Transverse colon (tissue), 4 donors: ENCODE measurements at regions of chr2 and their contacts with region 1.

Region 1: DNA sequence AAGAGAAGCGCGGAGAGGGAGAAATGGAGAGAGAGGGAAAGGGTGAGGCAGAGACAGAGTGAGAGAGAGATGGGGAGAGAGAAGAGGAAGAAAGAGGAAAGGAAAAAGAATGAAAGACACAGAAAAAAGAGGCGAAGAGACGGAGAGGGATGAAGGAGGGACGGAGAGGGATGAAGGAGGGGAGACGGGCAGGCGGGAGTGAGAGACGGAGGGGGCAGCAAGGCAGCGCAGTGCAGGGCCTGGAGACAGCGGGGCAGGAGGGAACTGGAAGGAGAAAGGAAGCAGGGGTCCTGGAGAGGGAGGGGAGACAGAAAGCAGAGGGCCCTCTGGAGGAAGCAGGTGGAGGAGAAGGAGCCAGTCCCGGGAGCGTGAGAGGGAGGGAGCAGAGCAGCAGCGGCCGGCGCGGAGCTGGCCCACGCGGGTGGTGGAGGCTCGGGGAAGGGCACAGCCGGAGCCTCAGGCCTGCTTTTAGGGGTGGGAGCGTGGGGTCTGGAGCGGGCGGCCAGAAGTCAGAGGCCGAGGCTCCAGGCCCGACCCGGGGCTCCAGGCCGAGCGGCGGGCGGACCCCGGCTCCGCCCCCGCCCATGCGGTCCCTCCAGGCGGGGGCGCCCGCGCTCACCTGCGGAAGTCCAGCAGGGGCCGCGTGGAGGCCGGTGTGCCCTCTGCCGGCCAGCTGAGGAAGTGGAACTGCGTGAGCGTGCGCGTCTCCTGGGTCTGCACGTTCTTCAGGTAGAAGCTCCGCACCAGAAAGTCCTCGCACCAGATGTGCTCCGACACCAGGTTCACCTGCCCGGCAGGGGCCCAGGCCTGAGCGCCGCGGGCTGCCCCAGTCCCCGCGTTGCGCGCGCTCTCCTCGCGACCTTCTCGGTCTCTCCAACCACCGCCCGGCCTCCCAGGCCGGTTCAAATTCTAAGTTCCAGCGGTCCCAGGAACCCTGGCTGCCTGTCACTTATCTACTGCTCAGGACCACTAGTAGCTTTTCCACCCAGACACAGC is 14.5 kb downstream of the PTPRN start:
- DNase-seq: peak; percentile 91
- H3K4me3 ChIP-seq: peak overlapping the region; percentile 53 to 75 (median 60)
- H3K27ac ChIP-seq: peak overlapping the region; percentile 78 to 90 (median 84)
- H3K4me1 ChIP-seq: peaks cover 3 to 24% (median 14%) of the 10 kb centered on the region in 4 donors
- H3K27me3 ChIP-seq: peaks cover 5% of the 10 kb centered on the region
- CTCF ChIP-seq: peak; percentile 92 to 100 (median 99)
- EP300 ChIP-seq: no peak
- POLR2A ChIP-seq: peak; percentile 29

Region 2: GRCh38 chr2:219057709-219058540 is 236.7 kb before region 1 on chr2:
- in situ Hi-C with region 1: loop called in 1 of 4 experiments (anchors 10 kb)
- intact Hi-C with region 1: no loop called
- DNase-seq: peak; percentile 86
- H3K4me3 ChIP-seq: peak overlapping the region; percentile 12 to 68 (median 55)
- H3K27ac ChIP-seq: peak overlapping the region; percentile 62 to 90 (median 86)
- H3K4me1 ChIP-seq: peaks cover 13 to 42% (median 37%) of the 10 kb centered on the region in 4 donors
- H3K27me3 ChIP-seq: peaks cover 74% of the 10 kb centered on the region
- CTCF ChIP-seq: peak; percentile 89 to 96 (median 93)
- EP300 ChIP-seq: no peak
- POLR2A ChIP-seq: no peak

Region 3: DNA sequence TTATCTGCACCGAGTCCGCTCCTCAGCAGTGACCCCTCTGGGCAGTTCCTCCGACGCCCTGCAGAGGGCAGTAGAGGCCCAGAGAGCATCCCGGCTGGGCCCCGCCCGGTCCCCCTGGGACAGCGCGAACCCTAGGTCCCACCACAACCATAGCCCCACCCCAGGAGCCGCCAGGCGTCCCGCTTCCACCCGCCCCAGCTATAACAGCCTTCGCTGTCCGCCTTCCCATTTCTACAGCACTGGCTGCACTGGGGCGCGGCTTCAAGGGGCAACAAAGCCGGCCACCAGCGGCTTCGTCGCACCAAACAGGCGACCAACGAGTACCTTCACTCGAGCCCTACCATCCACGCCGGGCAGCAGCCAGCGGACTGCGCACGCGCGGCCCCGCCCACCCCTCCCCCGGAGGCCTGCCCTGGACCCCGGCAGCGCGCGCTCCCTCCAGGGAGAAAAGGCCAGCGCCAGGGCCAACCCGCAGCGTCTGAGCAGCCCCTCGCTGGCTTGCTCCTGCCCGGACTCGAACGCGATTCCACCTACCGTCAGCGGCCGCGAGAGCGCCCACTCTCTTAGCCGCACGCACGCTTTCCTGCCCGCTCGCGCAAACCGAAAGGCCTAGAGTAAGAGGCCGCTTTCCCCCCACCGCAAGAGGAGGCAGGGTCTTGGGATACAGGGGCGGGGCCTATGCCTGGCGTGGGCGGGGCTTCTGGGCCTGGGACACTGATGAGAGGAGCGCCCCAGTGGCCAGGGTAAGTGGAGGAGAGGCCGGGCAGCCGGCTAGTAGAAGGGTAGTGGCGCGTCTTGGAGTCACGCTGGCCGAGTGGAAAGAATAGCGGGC is 134.3 kb before region 1 on chr2 and contains the start of gene NHEJ1:
- in situ Hi-C with region 1: loop called in 1 of 4 experiments (anchors 25 kb)
- intact Hi-C with region 1: loop called (anchors 5 kb)
- DNase-seq: peak; percentile 99
- H3K4me3 ChIP-seq: peak within 1 kb of the TSS; percentile 48 to 74 (median 58)
- H3K27ac ChIP-seq: peak within 1 kb of the TSS; percentile 93 to 98 (median 96)
- H3K4me1 ChIP-seq: peaks cover 4 to 14% (median 7%) of the 10 kb centered on the region in 4 donors
- H3K27me3 ChIP-seq: no peaks in the 10 kb centered on the region
- CTCF ChIP-seq: peak; percentile 98 to 100 (median 100)
- EP300 ChIP-seq: no peak
- POLR2A ChIP-seq: peak; percentile 63
- total RNA-seq, gene NHEJ1: 50.5 to 90.2 (median 65.3) TPM

Region 4: DNA sequence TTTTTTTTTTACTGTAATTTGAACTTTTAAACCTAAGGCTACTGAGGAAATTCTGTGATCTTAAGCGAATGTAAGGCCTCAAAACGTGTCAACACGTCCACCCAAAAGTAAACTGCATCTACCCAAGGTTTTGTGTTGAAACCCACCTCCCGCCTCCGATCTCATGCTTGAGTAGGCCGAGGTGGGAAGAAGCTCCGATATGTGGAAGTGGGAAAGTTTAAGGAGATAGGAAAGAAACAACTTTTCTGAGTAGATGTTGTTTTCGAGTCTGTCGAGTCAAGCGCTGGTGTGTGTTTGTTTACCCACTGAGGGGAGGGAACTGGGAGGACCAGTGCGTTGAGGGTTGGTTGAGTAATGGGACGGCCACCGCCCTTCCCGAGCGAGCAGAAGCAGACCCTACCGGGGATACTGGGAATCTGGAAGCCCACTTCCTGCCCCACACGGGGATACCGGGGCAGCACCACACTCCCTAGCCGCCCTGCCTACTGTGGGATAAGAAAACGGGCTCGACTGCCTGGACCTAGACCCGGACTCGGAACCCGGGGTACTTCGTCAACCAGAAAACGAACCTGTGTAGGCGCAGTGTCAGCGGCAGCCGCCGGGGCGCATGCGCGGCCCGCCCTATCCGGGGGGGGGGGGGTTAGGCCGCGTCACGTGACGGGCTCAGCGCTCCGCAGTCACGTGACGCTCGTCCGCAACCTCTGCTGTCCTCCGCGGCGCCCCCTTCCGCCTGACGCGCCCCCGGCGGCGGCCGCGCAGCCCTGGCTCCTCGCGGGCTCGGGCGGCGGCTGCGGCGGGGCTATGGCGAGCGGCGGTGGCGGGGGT is 116.9 kb before region 1 on chr2 and contains the start of gene RETREG2:
- in situ Hi-C with region 1: loop called in 3 of 4 experiments (anchors 10 to 25 kb)
- intact Hi-C with region 1: no loop called
- DNase-seq: peak; percentile 89
- H3K4me3 ChIP-seq: peak within 1 kb of the TSS; percentile 57 to 100 (median 92)
- H3K27ac ChIP-seq: peak within 1 kb of the TSS; percentile 93 to 100 (median 96)
- H3K4me1 ChIP-seq: peaks cover 14 to 56% (median 36%) of the 10 kb centered on the region in 4 donors
- H3K27me3 ChIP-seq: no peaks in the 10 kb centered on the region
- CTCF ChIP-seq: peak in 4 of 5 experiments; percentile 30 to 43 (median 34)
- EP300 ChIP-seq: peak; percentile 4
- POLR2A ChIP-seq: peak; percentile 99
- total RNA-seq, gene RETREG2: 37.8 to 226 (median 102) TPM

Region 5: GRCh38 chr2:219229305-219230058 is 65.2 kb before region 1 on chr2 and contains the starts of genes ANKZF1 and ATG9A:
- in situ Hi-C with region 1: no loop called
- intact Hi-C with region 1: loop called (anchors 10 kb)
- DNase-seq: peak; percentile 99
- H3K4me3 ChIP-seq: peak within 1 kb of the TSS; percentile 78 to 90 (median 81)
- H3K27ac ChIP-seq: peak within 1 kb of the TSS; percentile 92 to 98 (median 96)
- H3K4me1 ChIP-seq: peaks cover 18 to 36% (median 30%) of the 10 kb centered on the region in 4 donors
- H3K27me3 ChIP-seq: no peaks in the 10 kb centered on the region
- CTCF ChIP-seq: peak in 1 of 5 experiments; percentile 28
- EP300 ChIP-seq: no peak
- POLR2A ChIP-seq: peak; percentile 94
- total RNA-seq, gene ANKZF1: 64.3 to 318 (median 114) TPM
- total RNA-seq, gene ATG9A: 73.2 to 243 (median 82.7) TPM

Region 6: DNA sequence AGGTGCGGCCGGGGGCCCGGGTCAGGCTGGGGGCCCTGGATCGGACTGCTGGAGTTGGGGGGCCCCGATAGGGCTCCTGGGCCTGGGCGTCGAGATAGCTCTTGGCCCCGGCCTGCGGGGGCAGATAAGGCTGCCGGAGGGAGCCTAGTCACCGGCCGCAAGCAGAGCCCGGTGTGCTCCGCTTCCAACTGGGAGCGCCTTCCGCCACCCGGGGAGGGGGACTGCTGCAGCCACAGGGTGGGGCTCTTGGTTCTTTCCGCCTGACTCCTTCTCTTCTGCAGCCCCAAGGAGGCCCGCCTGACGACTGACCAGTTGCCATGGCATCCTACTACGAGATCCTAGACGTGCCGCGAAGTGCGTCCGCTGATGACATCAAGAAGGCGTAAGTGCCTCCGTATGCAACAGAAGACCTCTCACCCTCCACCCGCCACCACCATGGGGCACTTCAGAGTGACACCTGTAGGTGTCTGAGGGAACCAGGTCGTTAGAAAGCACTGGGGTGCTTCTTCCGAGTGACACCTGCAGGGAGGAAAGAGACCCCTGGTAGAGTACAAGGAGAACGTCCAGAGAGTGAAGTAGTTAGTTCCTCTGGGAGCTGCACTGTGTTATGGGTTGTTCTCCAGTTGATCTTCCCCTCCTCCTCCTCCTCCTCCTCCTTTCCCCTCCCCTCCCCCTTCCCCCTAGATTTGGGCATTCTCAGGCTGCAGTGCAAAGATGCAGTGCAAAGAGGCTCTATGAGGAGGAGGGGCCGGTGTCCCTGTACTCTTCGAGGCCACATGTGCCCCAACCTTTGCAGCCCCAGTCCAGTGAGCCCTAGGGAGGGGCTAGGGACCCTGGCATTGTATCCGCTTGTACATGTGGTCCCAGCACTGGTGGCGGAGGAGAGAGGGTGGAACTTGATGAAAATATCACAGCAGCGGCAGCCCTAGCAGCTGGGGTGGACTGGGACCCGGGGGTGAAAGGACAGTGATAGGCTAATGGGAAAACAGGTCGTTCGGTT is 14.8 kb before region 1 on chr2:
- in situ Hi-C with region 1: no loop called
- intact Hi-C with region 1: loop called (anchors 2 kb)
- DNase-seq: peak; percentile 68
- H3K4me3 ChIP-seq: peak overlapping the region; percentile 53 to 91 (median 68)
- H3K27ac ChIP-seq: peak overlapping the region; percentile 94 to 98 (median 98)
- H3K4me1 ChIP-seq: peaks cover 16 to 27% (median 21%) of the 10 kb centered on the region in 4 donors
- H3K27me3 ChIP-seq: no peaks in the 10 kb centered on the region
- CTCF ChIP-seq: peak in 3 of 5 experiments; percentile 8 to 34 (median 20)
- EP300 ChIP-seq: no peak
- POLR2A ChIP-seq: peak; percentile 3